ENCODE measurements at regions of chr10 and their contacts with region 1.

Region 1: GRCh38 chr10:128263891-128264688 is 137.9 kb upstream of the MKI67 start:
- ATAC-seq: peak; percentile 61 to 97 (median 74)
- H3K4me3 ChIP-seq: no peak overlapping the region
- H3K27ac ChIP-seq: no peak overlapping the region
- H3K4me1 ChIP-seq: peaks cover 11 to 12% of the 10 kb centered on the region in 2 donors

Region 2: GRCh38 chr10:128511284-128511683 is 247.2 kb after region 1 on chr10:
- in situ Hi-C with region 1: loop called in 2 of 9 experiments (anchors 25 kb)
- ATAC-seq: peak in 4 of 8 experiments; percentile 52 to 93 (median 58)
- H3K4me3 ChIP-seq: no peak overlapping the region
- H3K27ac ChIP-seq: no peak overlapping the region
- H3K4me1 ChIP-seq: no peaks in the 10 kb centered on the region

Region 3: DNA sequence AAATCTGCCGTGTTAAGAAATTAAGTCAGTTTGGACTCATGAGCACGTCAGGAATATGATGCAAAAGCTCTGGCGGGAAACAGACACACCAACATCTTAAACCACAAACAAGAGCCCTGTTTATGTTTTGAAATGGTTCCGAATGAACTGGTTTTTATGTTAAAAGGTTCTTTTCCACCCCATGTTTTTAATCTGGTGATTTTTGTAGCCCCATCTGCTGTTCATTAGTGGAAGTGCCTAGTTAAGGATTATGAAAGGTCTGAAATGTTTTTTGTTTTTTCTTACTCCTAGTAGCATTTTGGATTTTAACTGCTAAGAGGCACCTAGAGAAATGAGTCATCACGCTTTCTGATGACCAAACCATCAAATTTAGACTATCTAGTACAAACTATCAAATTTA is 266.2 kb after region 1 on chr10:
- in situ Hi-C with region 1: loop called in 2 of 9 experiments (anchors 25 kb)
- ATAC-seq: peak in 1 of 8 experiments; percentile 22
- H3K4me3 ChIP-seq: no peak overlapping the region
- H3K27ac ChIP-seq: no peak overlapping the region
- H3K4me1 ChIP-seq: peaks cover 15 to 20% of the 10 kb centered on the region in 2 donors

Region 4: DNA sequence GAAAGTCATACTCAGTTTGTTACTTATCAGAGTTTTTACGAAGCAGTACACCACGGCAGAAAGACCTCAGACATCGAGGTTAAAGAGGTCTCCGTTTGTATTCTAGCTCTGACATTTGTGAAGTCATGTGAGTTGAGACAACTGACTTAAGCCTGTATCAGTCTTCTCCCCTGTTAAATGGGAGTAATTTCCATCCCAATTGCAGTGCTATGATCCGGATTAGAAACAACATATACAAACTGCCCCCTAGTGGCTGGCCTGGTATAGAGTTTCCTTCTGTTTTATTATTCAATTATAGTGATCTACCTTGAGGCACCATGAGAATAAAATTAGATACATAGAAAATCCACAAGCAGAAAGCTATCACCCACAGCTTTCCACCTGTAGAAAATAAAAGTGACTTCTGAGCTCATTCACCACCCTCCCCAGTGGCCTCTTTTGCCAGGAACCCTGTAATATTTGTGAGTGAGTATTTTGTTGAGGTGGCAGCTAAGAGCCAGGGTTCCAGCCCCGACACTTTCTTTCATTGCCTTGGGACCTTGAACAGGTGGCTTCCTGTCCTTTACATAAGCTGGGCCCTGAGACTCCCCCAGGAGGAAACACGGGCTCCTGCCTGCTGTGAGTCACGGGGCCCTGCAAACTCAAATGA is 595.8 kb after region 1 on chr10:
- in situ Hi-C with region 1: loop called in 1 of 9 experiments (anchors 25 kb)
- ATAC-seq: peak in 1 of 8 experiments; percentile 48
- H3K4me3 ChIP-seq: no peak overlapping the region
- H3K27ac ChIP-seq: no peak overlapping the region
- H3K4me1 ChIP-seq: peaks cover 0 to 1% of the 10 kb centered on the region in 2 donors

Region 5: GRCh38 chr10:129030996-129031843 is 767.1 kb after region 1 on chr10:
- in situ Hi-C with region 1: loop called in 1 of 9 experiments (anchors 25 kb)
- ATAC-seq: peak; percentile 85 to 99 (median 92)
- H3K4me3 ChIP-seq: no peak overlapping the region
- H3K27ac ChIP-seq: no peak overlapping the region
- H3K4me1 ChIP-seq: peaks cover 27 to 75% of the 10 kb centered on the region in 2 donors

Region 6: DNA sequence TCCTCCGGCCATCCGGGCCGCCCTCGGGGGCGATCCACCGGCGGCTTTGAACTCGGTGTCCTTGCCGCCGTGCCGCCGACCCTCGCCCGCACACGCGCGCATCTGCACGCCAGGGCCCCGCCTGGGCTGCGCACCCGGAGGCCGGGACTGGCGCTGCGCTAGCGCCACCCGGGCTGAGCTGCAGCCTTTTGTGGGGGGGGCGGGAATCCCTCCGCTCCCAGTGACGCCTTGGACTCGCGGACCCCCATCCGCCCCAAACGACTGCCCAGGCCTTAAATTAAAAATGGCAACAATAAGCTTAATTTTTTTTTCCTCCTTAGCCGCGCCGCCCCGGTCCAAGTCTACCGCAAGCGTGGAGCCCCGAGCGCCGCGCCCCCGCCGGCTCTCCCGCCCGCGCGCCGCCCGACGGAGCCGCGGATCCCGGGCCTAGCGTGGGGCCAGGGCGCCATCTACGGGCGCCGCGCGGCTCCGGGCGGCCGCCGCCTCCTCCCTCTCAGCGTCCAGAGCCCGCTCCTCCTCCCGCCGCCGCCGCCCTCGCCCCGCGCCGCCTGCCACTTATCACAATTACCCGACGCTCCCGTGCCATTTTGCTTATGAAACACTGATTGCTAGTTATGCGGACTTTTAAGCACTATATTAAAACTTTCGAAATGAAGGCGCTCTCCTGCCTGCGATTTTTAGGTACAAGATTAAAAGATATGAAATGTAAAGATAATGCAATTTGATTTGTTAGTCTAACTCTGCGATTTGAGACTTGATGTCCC is 1707.5 kb after region 1 on chr10:
- in situ Hi-C with region 1: loop called in 2 of 9 experiments (anchors 25 kb)
- ATAC-seq: peak; percentile 81 to 92 (median 88)
- H3K4me3 ChIP-seq: peak overlapping the region; percentile 34 to 48 (median 44)
- H3K27ac ChIP-seq: peak overlapping the region in 1 of 2 donors; percentile 12
- H3K4me1 ChIP-seq: peaks cover 30 to 40% of the 10 kb centered on the region in 2 donors

Region 7: GRCh38 chr10:129993621-129994020 is 1729.5 kb after region 1 on chr10:
- in situ Hi-C with region 1: loop called in 1 of 9 experiments (anchors 25 kb)
- ATAC-seq: peak in 2 of 8 experiments; percentile 18 to 74
- H3K4me3 ChIP-seq: no peak overlapping the region
- H3K27ac ChIP-seq: no peak overlapping the region
- H3K4me1 ChIP-seq: no peaks in the 10 kb centered on the region